WTC11 (cell line): ENCODE measurements at regions of chr20 and their contacts with region 1.

Region 1: DNA sequence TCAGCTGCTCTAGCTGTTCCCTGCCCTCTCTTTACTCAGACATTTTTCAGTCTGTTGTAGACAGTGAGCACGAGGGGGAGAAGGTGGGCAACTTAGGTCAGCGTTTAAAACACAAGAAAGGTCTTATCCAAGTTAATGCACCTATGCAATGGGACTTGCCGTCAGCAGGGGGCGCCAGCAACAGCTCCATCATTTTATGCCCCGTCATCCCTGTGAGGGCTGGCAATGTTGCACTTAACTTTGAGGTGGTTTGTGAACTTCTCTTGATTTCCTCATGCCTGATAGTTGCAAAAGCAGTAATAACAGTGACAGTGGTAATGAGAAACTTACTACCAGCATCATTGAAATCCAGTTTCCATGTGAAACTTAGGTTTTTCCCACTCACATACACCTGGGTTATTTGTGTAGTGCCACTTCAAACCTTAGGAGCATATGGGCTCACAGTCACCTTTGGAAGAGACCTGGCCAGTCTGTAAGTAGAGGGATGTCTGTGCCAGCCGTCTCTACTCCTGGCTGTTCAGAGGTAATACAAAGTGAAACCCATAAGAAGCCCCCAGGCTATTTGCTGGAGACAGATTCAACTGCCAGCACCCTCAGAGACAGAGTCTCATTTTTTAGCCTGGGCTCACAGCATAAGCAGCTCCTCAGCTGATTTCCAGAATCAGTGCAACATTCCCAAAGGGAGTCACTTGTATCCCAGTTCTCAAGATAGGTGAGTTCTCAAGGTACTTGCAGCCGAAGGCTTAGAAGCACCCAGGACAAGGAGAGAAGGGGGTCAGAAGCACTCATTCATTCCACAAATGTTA is 44.8 kb upstream of the ID1 start:
- DNase-seq: peak; percentile 77
- ATAC-seq: peak; percentile 52
- H3K4me3 Mint-ChIP-seq: no peak overlapping the region
- H3K27ac Mint-ChIP-seq: peak overlapping the region; percentile 93
- H3K4me1 Mint-ChIP-seq: peaks cover 10% of the 10 kb centered on the region
- H3K27me3 Mint-ChIP-seq: no peaks in the 10 kb centered on the region
- CTCF ChIP-seq: peak; percentile 91

Region 2: DNA sequence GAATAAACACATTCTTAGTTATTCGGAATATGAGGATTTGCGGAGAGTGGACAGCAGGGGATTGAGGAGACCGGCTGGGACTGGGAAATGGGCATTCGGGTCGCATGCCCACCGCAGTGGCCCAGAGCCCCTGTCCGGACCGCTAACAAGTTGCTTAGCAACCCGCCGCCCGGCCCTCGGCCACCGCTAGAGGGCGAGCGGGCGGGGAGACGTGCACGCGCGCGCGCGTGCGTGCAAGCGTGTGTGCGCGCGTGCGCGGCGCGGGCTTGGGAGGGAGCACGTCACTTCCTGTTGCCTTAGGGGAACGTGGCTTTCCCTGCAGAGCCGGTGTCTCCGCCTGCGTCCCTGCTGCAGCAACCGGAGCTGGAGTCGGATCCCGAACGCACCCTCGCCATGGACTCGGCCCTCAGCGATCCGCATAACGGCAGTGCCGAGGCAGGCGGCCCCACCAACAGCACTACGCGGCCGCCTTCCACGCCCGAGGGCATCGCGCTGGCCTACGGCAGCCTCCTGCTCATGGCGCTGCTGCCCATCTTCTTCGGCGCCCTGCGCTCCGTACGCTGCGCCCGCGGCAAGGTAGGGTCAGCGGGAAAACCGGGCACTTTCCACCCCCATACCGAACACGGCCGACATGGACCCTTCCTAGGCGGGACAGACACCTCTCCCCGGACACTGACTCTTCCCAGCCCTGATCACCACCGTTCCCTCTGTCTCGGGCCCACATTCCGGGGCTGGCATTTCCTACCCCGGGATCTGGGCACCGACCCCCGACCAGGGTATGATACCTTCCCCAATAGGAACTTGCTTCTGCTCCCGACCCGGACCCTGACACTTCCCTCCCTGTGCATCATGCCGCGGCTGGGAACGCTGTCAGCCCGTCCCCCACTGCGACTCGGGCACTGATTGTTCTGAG is 45.9 kb before region 1 on chr20 and contains the start of gene HM13:
- CTCF ChIA-PET with region 1: interaction called, 15 read pairs
- POLR2A ChIA-PET with region 1: no interaction called
- DNase-seq: peak; percentile 90
- ATAC-seq: peak; percentile 72
- H3K4me3 Mint-ChIP-seq: peak within 1 kb of the TSS; percentile 34
- H3K27ac Mint-ChIP-seq: no peak within 1 kb of the TSS
- H3K4me1 Mint-ChIP-seq: no peaks in the 10 kb centered on the region
- H3K27me3 Mint-ChIP-seq: peaks cover 5% of the 10 kb centered on the region; the same call in 1 of the 2 replicates
- CTCF ChIP-seq: peak; percentile 91
- total RNA-seq, gene HM13: 93.3 to 103 TPM (median 101 TPM) in 3 replicates

Region 3: DNA sequence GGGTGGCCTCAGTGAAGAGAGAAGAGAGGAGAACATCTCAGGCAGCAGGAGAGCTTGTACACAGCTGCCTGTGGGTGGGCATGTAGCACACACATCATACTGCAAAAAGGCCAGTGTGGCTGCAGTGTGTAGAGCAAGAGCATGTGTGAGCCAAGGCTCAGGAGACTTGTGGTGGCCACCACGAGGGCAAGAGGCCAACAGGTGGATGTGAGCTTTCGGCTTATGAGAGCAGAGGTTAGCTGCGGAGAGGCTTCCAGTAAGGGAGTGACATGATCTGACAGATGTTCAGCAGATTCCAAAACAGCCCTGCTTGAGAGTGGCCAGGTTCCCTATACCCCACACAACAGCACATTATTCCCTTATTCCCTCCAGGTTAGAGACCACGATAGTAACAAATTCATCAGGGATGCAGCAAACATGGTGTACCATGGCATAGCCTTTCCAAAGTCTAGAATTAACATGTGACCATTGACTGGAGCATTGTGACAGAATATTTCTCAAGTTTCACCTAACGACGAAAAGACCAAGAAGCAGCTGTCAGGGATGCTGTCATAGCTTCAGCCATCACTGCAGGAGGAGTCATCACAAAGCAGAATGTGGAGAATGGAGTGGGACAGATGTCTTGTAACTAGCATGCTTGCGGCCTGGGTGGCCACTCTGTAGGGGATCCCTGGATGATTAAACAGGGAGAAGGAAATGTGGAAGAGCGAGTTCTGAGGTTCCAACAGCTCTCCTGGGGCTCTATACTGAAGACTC is 23.0 kb before region 1 on chr20:
- CTCF ChIA-PET with region 1: interaction called, 11 read pairs
- POLR2A ChIA-PET with region 1: no interaction called
- DNase-seq: no peak
- ATAC-seq: no peak
- H3K4me3 Mint-ChIP-seq: no peak overlapping the region
- H3K27ac Mint-ChIP-seq: no peak overlapping the region
- H3K4me1 Mint-ChIP-seq: no peaks in the 10 kb centered on the region
- H3K27me3 Mint-ChIP-seq: no peaks in the 10 kb centered on the region
- CTCF ChIP-seq: no peak

Region 4: GRCh38 chr20:31572701-31573554 is 12.6 kb after region 1 on chr20:
- CTCF ChIA-PET with region 1: interaction called, 321 read pairs
- POLR2A ChIA-PET with region 1: interaction called, 11 read pairs
- DNase-seq: peak; percentile 94
- ATAC-seq: peak; percentile 82
- H3K4me3 Mint-ChIP-seq: peak overlapping the region; percentile 83
- H3K27ac Mint-ChIP-seq: peak overlapping the region; percentile 97
- H3K4me1 Mint-ChIP-seq: peaks cover 60% of the 10 kb centered on the region
- H3K27me3 Mint-ChIP-seq: no peaks in the 10 kb centered on the region; the same call in 1 of the 2 replicates
- CTCF ChIP-seq: no peak

Region 5: GRCh38 chr20:31605031-31605901 is 45.0 kb after region 1 on chr20 and contains the start of gene ID1:
- CTCF ChIA-PET with region 1: interaction called, 927 read pairs
- POLR2A ChIA-PET with region 1: interaction called, 6 read pairs
- DNase-seq: peak; percentile 95
- ATAC-seq: peak; percentile 54
- H3K4me3 Mint-ChIP-seq: peak within 1 kb of the TSS; percentile 96
- H3K27ac Mint-ChIP-seq: peak within 1 kb of the TSS; percentile 99
- H3K4me1 Mint-ChIP-seq: peaks cover 42% of the 10 kb centered on the region
- H3K27me3 Mint-ChIP-seq: peaks cover 2% of the 10 kb centered on the region; the same call in 1 of the 2 replicates
- CTCF ChIP-seq: no peak
- total RNA-seq, gene ID1: 88.8 to 158 TPM (median 149 TPM) in 3 replicates

Region 6: GRCh38 chr20:31835977-31836852 is 275.9 kb after region 1 on chr20:
- CTCF ChIA-PET with region 1: interaction called, 13 read pairs
- POLR2A ChIA-PET with region 1: no interaction called
- DNase-seq: no peak
- ATAC-seq: no peak
- H3K4me3 Mint-ChIP-seq: no peak overlapping the region
- H3K27ac Mint-ChIP-seq: no peak overlapping the region
- H3K4me1 Mint-ChIP-seq: 0 out of 2 replicates have a peak, but pooled peaks cover 13% of the 10 kb centered on the region
- H3K27me3 Mint-ChIP-seq: no peaks in the 10 kb centered on the region
- CTCF ChIP-seq: no peak